ENCODE measurements at regions of chr18 and their contacts with region 1.

Region 1: GRCh38 chr18:32271672-32272208 is 81.9 kb downstream of the MEP1B start:
- DNase-seq: no peak
- H3K4me3 ChIP-seq: no peak overlapping the region
- H3K27ac ChIP-seq: no peak overlapping the region
- H3K4me1 ChIP-seq: no peaks in the 10 kb centered on the region
- H3K27me3 ChIP-seq: no peaks in the 10 kb centered on the region
- CTCF ChIP-seq: peak; percentile 51

Region 2: GRCh38 chr18:32552421-32553030 is 280.8 kb after region 1 on chr18:
- intact Hi-C with region 1: loop called (anchors 5 kb)
- DNase-seq: peak; percentile 82
- H3K4me3 ChIP-seq: no peak overlapping the region
- H3K27ac ChIP-seq: no peak overlapping the region
- H3K4me1 ChIP-seq: no peaks in the 10 kb centered on the region
- H3K27me3 ChIP-seq: no peaks in the 10 kb centered on the region
- CTCF ChIP-seq: peak; percentile 77

Region 3: GRCh38 chr18:32771169-32771751 is 499.5 kb after region 1 on chr18:
- intact Hi-C with region 1: no loop called
- DNase-seq: peak; percentile 22
- H3K4me3 ChIP-seq: peak overlapping the region; percentile 24
- H3K27ac ChIP-seq: no peak overlapping the region
- H3K4me1 ChIP-seq: peaks cover 7% of the 10 kb centered on the region
- H3K27me3 ChIP-seq: peaks cover 35% of the 10 kb centered on the region
- CTCF ChIP-seq: no peak